ENCODE measurements at regions of chr10 and their contacts with region 1.

Region 1: GRCh38 chr10:70758757-70759514 is 26.2 kb downstream of the TBATA start:
- DNase-seq: peak; percentile 85
- H3K4me3 ChIP-seq: no peak overlapping the region
- H3K27ac ChIP-seq: no peak overlapping the region; the same call in 1 of the 2 replicates
- H3K4me1 ChIP-seq: peaks cover 13% of the 10 kb centered on the region; the same call in 1 of the 2 replicates
- H3K27me3 ChIP-seq: no peaks in the 10 kb centered on the region

Region 2: DNA sequence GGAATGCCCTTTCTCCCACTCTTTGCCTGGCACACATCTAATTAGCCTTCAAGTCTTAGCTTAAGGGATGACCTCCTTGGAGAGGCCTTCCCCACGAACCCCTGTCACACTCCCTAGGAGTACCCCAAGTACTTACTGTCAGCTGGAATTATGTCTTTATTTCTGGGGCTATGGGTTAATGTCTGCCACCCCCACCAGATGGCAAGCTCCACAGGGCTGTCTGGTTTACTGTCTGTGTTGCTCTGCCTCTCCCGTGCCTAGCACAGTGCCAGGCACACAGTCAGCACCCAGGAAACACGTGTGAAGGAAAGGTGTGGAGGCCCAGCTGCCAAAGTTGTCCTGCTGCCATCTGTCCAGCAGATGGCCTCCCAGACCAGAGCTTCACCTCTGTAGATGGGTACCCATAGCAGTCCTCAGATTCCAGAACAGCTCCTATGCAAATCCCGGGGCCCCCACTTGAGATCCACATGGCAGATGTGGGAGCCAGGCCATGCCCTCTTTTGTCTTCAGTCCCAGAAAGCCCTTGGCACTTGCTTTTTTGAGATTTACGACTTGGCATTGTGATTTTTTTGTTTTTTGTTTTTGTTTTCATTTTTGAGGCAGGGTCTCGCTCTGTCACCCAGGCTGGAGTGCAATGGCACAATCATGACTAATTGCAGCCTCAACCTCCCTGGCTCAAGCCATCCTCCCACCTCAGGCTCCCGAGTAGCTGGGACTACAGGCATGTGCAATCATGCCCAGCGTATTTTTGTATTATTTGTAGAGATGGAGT is 297.5 kb before region 1 on chr10:
- in situ Hi-C with region 1: loop called (anchors 10 kb)
- DNase-seq: peak; percentile 74
- H3K4me3 ChIP-seq: no peak overlapping the region
- H3K27ac ChIP-seq: no peak overlapping the region
- H3K4me1 ChIP-seq: no peaks in the 10 kb centered on the region
- H3K27me3 ChIP-seq: 0 out of 2 replicates have a peak, but pooled peaks cover 2% of the 10 kb centered on the region

Region 3: GRCh38 chr10:70549962-70550458 is 208.9 kb before region 1 on chr10:
- in situ Hi-C with region 1: loop called (anchors 5 kb)
- DNase-seq: peak; percentile 68
- H3K4me3 ChIP-seq: no peak overlapping the region
- H3K27ac ChIP-seq: no peak overlapping the region
- H3K4me1 ChIP-seq: no peaks in the 10 kb centered on the region
- H3K27me3 ChIP-seq: no peaks in the 10 kb centered on the region

Region 4: DNA sequence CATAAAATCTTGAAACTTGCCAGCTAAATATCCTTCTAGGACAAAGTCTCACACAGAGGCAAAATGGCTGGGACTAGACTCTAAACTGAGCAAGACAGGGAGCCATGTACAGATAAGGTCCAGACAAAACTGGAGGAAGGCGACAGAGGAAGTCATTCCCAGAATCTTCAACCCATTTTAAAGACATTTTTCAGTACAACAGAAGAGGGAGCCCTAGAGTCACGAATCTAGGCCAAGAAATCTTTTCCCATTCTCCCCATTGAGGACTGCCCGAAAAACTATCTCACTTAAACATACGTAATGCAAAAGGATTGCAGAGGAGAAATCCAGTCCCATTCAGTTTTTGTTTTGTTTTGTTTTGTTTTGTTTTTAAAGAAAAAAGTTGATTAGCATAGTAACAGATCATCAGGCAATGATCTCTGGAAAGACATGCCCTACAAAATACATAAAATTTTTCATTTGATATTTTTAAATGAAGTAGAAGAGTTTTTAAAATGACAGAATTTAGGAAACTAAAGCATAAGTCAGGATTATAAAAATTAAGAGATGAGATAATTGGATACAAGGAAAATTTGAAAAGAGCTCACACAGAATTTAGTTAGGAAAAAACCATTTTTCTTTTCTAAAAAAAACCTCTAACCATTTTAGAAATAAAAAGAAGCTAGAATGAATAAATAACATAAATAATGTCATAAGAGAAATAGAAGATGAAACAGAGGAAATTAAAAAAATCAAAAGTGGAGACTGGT is 139.5 kb before region 1 on chr10:
- in situ Hi-C with region 1: no loop called
- DNase-seq: peak; percentile 66
- H3K4me3 ChIP-seq: no peak overlapping the region
- H3K27ac ChIP-seq: no peak overlapping the region
- H3K4me1 ChIP-seq: peaks cover 12% of the 10 kb centered on the region; the same call in 1 of the 2 replicates
- H3K27me3 ChIP-seq: no peaks in the 10 kb centered on the region

Region 5: GRCh38 chr10:71099731-71100361 is 340.9 kb after region 1 on chr10:
- in situ Hi-C with region 1: no loop called
- DNase-seq: no peak
- H3K4me3 ChIP-seq: no peak overlapping the region
- H3K27ac ChIP-seq: no peak overlapping the region
- H3K4me1 ChIP-seq: no peaks in the 10 kb centered on the region
- H3K27me3 ChIP-seq: peaks cover 55% of the 10 kb centered on the region